ENCODE measurements at regions of chr5 and their contacts with region 1.

Region 1: GRCh38 chr5:141512390-141512910 is 23.6 kb downstream of the PCDHGC5 start:
- DNase-seq: peak; percentile 92
- H3K4me3 Mint-ChIP-seq: peak overlapping the region; percentile 73
- H3K27ac Mint-ChIP-seq: no peak overlapping the region
- H3K4me1 Mint-ChIP-seq: peaks cover 33% of the 10 kb centered on the region
- H3K27me3 Mint-ChIP-seq: no peaks in the 10 kb centered on the region

Region 2: GRCh38 chr5:141412854-141413539 is 99.5 kb before region 1 on chr5 and contains the start of gene PCDHGA10:
- CTCF ChIA-PET with region 1: interaction called, 45 read pairs
- intact Hi-C with region 1: loop called (anchors 1 kb)
- DNase-seq: peak; percentile 73
- H3K4me3 Mint-ChIP-seq: peak within 1 kb of the TSS; percentile 78
- H3K27ac Mint-ChIP-seq: no peak within 1 kb of the TSS
- H3K4me1 Mint-ChIP-seq: peaks cover 16% of the 10 kb centered on the region
- H3K27me3 Mint-ChIP-seq: peaks cover 69% of the 10 kb centered on the region
- total RNA-seq, gene PCDHGA10: 0.05 TPM in 1 of 2 experiments, not detected in the other

Region 3: GRCh38 chr5:141430332-141431113 is 81.9 kb before region 1 on chr5 and contains the start of gene PCDHGA12:
- CTCF ChIA-PET with region 1: interaction called, 12 read pairs
- intact Hi-C with region 1: loop called (anchors 1 kb)
- DNase-seq: peak; percentile 65
- H3K4me3 Mint-ChIP-seq: peak within 1 kb of the TSS; percentile 53
- H3K27ac Mint-ChIP-seq: no peak within 1 kb of the TSS
- H3K4me1 Mint-ChIP-seq: peaks cover 15% of the 10 kb centered on the region
- H3K27me3 Mint-ChIP-seq: peaks cover 54% of the 10 kb centered on the region
- total RNA-seq, gene PCDHGA12: not detected

Region 4: GRCh38 chr5:141492168-141492885 is 20.1 kb before region 1 on chr5:
- CTCF ChIA-PET with region 1: interaction called, 24 read pairs
- intact Hi-C with region 1: loop called (anchors 1 kb)
- DNase-seq: peak; percentile 20
- H3K4me3 Mint-ChIP-seq: peak overlapping the region; percentile 59
- H3K27ac Mint-ChIP-seq: no peak overlapping the region
- H3K4me1 Mint-ChIP-seq: peaks cover 5% of the 10 kb centered on the region
- H3K27me3 Mint-ChIP-seq: peaks cover 67% of the 10 kb centered on the region

Region 5: DNA sequence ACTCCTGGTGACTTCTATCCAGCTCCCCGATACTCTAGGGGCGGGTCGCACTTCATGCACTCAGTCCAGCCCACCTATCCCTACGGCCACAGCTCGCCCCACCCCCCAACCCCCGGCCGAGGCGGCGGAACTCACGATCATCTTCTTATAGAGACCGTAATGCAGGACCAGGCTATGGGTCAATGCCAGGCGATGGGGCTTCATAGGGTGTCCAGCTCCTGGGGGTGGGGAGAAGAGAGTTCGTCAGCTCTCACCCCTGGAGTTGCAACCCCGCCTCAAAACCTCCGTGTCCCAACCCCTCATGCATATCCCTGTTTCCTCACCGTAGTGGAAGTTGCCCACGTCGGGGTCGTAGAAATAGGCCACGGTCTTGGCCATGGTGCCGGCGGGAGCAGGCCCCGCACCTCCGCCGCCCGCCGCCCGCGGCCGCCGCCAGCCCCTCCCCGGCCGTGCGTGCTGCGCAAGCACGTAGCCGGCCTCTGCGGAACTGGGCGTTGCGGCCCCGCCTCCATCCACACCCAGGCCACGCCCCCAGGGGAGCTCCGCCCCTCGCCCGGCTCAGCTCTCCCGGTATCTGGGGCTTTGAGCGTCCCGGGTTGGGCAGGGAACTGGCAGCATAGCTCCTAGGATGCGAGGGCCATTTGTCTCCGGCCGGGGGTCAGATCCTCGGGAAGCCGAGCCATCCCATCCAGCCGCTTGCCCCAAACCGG is 124.1 kb after region 1 on chr5 and contains the starts of genes HDAC3 and RELL2:
- CTCF ChIA-PET with region 1: interaction called, 6 read pairs
- intact Hi-C with region 1: loop called (anchors 2 kb)
- DNase-seq: peak; percentile 94
- H3K4me3 Mint-ChIP-seq: peak within 1 kb of the TSS; percentile 93
- H3K27ac Mint-ChIP-seq: peak within 1 kb of the TSS; percentile 87
- H3K4me1 Mint-ChIP-seq: peaks cover 51% of the 10 kb centered on the region
- H3K27me3 Mint-ChIP-seq: no peaks in the 10 kb centered on the region
- total RNA-seq, gene HDAC3: 52.1 to 55.6 TPM
- total RNA-seq, gene RELL2: 20.9 to 21.1 TPM